ENCODE measurements at regions of chrX and their contacts with region 1.

Region 1: GRCh38 chrX:80285131-80285773 is 135.0 kb upstream of the TENT5D start:
- DNase-seq: no peak
- ATAC-seq: no peak
- H3K4me3 ChIP-seq: no peak overlapping the region
- H3K27ac ChIP-seq: no peak overlapping the region
- H3K4me1 ChIP-seq: no peaks in the 10 kb centered on the region
- H3K27me3 ChIP-seq: no peaks in the 10 kb centered on the region
- CTCF ChIP-seq: peak in 6 of 9 donors; percentile 25 to 40 (median 32)

Region 2: GRCh38 chrX:79933938-79934337 is 351.3 kb before region 1 on chrX:
- intact Hi-C with region 1: no loop called
- DNase-seq: no peak
- ATAC-seq: no peak
- H3K4me3 ChIP-seq: no peak overlapping the region
- H3K27ac ChIP-seq: no peak overlapping the region
- H3K4me1 ChIP-seq: no peaks in the 10 kb centered on the region
- H3K27me3 ChIP-seq: no peaks in the 10 kb centered on the region
- CTCF ChIP-seq: no peak

Region 3: DNA sequence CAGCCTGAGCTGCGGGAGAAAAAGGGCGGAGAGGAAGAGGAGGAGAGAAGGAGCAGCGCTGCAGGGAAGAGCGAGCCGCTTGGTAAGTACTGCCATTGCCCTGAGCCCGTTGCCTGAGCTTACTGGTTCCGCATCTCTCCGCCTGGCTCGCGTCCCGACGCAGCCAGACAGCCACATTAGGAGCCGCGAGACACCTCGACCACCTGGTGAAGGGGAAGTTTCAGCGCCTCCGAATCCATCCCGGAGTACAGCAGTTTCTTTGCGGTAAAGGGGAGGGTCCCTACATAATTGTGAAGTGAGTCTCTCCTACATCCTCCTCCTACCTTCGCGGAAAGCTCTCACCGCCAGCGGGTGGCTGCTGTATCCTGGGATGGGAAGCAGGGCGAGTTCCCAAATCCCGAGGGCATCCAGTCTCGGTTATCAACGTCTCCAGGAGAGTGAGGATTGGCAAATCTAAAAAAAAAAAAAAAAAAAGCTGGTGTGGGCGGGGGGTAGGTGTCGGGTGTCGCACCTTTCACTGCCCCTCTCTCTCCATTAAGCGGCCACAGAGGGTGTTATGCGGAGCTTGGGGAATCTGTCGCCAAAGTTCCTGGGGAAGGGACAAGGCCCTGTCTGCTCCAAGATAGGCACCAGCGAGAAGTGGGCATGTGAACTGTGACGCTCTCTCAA is 262.8 kb before region 1 on chrX:
- intact Hi-C with region 1: no loop called
- DNase-seq: no peak
- ATAC-seq: peak in 1 of 8 donors; percentile 25
- H3K4me3 ChIP-seq: peak overlapping the region in 5 of 10 donors; percentile 5 to 36 (median 31)
- H3K27ac ChIP-seq: no peak overlapping the region
- H3K4me1 ChIP-seq: no peaks in the 10 kb centered on the region
- H3K27me3 ChIP-seq: peaks cover 0 to 18% (median 0%) of the 10 kb centered on the region in 7 donors
- CTCF ChIP-seq: no peak

Region 4: DNA sequence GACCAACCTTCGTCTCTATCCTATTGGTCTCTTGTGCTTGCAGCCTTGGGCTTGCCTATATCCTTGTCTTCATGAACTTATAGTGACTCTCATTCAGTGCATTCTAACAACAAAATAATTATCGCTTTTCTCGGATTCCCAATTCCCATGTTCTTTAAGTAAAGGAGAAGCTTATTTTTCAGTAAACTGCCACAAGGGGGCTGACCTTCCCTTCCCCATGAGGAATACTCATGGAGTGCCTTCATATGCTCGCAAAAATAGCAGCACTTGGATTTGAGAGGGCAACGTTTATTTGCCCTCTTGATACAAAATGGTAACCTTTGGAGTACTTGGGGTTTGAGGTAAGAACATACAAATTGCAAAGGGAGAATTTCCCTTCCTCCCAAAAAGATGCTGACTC is 48.2 kb before region 1 on chrX:
- intact Hi-C with region 1: loop called in 1 of 10 experiments (anchors 2 kb)
- DNase-seq: no peak
- ATAC-seq: no peak
- H3K4me3 ChIP-seq: no peak overlapping the region
- H3K27ac ChIP-seq: no peak overlapping the region
- H3K4me1 ChIP-seq: no peaks in the 10 kb centered on the region
- H3K27me3 ChIP-seq: no peaks in the 10 kb centered on the region
- CTCF ChIP-seq: peak in 2 of 9 donors; percentile 5 to 10

Measured in heart right ventricle (tissue), 16 donors.